ENCODE measurements at regions of chr7 and their contacts with region 1.

Region 1: GRCh38 chr7:146314962-146315361 is 198.4 kb downstream of the CNTNAP2 start:
- DNase-seq: no peak
- H3K4me3 ChIP-seq: no peak overlapping the region
- H3K4me3 Mint-ChIP-seq: no peak overlapping the region
- H3K27ac ChIP-seq: no peak overlapping the region
- H3K27ac Mint-ChIP-seq: no peak overlapping the region
- H3K4me1 ChIP-seq: no peaks in the 10 kb centered on the region
- H3K4me1 Mint-ChIP-seq: no peaks in the 10 kb centered on the region
- H3K27me3 ChIP-seq: no peaks in the 10 kb centered on the region
- H3K27me3 Mint-ChIP-seq: no peaks in the 10 kb centered on the region

Region 2: GRCh38 chr7:146067880-146068279 is 247.1 kb before region 1 on chr7:
- CTCF ChIA-PET with region 1: no interaction called
- POLR2A ChIA-PET with region 1: no interaction called
- intact Hi-C with region 1: no loop called
- DNase-seq: no peak
- H3K4me3 ChIP-seq: no peak overlapping the region
- H3K4me3 Mint-ChIP-seq: no peak overlapping the region
- H3K27ac ChIP-seq: no peak overlapping the region
- H3K27ac Mint-ChIP-seq: no peak overlapping the region
- H3K4me1 ChIP-seq: no peaks in the 10 kb centered on the region
- H3K4me1 Mint-ChIP-seq: no peaks in the 10 kb centered on the region
- H3K27me3 ChIP-seq: no peaks in the 10 kb centered on the region
- H3K27me3 Mint-ChIP-seq: no peaks in the 10 kb centered on the region

Region 3: DNA sequence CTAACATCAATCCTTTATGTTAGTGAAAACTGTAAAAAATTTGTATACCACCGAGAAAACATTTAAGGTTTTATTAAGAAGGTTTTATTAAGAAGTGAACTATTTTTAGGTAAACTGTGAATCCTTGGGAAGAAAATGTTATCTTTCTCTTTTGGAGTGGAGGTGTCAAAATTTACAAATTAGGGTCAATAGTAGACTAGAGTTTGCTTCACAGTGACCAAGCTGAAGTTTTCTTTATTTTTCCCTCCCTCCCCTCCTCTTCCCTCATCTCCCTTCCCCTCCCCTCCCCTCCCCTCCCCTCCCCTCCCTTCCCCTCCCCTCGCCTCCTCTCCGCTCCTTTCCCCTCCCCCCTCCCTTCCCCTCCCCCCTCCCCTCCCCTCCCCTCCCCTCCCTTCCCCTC is 29.5 kb before region 1 on chr7:
- CTCF ChIA-PET with region 1: no interaction called
- POLR2A ChIA-PET with region 1: no interaction called
- intact Hi-C with region 1: no loop called
- DNase-seq: no peak
- H3K4me3 ChIP-seq: no peak overlapping the region
- H3K4me3 Mint-ChIP-seq: no peak overlapping the region
- H3K27ac ChIP-seq: no peak overlapping the region
- H3K27ac Mint-ChIP-seq: no peak overlapping the region
- H3K4me1 ChIP-seq: no peaks in the 10 kb centered on the region
- H3K4me1 Mint-ChIP-seq: no peaks in the 10 kb centered on the region
- H3K27me3 ChIP-seq: no peaks in the 10 kb centered on the region
- H3K27me3 Mint-ChIP-seq: no peaks in the 10 kb centered on the region

Region 4: DNA sequence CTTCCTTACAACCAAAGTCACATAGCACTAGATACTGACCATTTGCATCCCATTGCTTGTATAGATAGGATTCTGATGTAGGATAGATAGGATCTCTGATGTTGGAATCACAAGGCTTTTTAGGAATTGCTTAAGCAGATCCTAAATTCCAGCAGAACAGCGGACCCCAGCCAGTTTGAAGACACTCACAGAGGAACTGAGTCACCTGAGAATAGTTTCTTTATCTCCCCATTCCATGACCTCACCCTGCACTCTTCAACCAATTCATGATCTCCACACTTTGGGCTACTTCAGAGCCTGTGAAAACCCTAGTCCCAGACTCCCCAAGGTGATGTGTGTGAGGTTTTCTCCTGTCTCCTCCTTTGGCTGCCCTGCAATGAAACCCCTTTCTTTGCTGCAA is 18.9 kb before region 1 on chr7:
- CTCF ChIA-PET with region 1: no interaction called
- POLR2A ChIA-PET with region 1: no interaction called
- intact Hi-C with region 1: loop called (anchors 2 kb)
- DNase-seq: no peak
- H3K4me3 ChIP-seq: no peak overlapping the region
- H3K4me3 Mint-ChIP-seq: no peak overlapping the region
- H3K27ac ChIP-seq: no peak overlapping the region
- H3K27ac Mint-ChIP-seq: no peak overlapping the region
- H3K4me1 ChIP-seq: no peaks in the 10 kb centered on the region
- H3K4me1 Mint-ChIP-seq: no peaks in the 10 kb centered on the region
- H3K27me3 ChIP-seq: no peaks in the 10 kb centered on the region
- H3K27me3 Mint-ChIP-seq: no peaks in the 10 kb centered on the region

Region 5: GRCh38 chr7:146414373-146414772 is 99.4 kb after region 1 on chr7:
- CTCF ChIA-PET with region 1: no interaction called
- POLR2A ChIA-PET with region 1: no interaction called
- intact Hi-C with region 1: no loop called
- DNase-seq: no peak
- H3K4me3 ChIP-seq: no peak overlapping the region
- H3K4me3 Mint-ChIP-seq: no peak overlapping the region
- H3K27ac ChIP-seq: no peak overlapping the region
- H3K27ac Mint-ChIP-seq: no peak overlapping the region
- H3K4me1 ChIP-seq: no peaks in the 10 kb centered on the region
- H3K4me1 Mint-ChIP-seq: no peaks in the 10 kb centered on the region
- H3K27me3 ChIP-seq: no peaks in the 10 kb centered on the region
- H3K27me3 Mint-ChIP-seq: no peaks in the 10 kb centered on the region

Region 6: GRCh38 chr7:147044941-147045340 is 730.0 kb after region 1 on chr7:
- CTCF ChIA-PET with region 1: no interaction called
- POLR2A ChIA-PET with region 1: no interaction called
- intact Hi-C with region 1: no loop called
- DNase-seq: no peak
- H3K4me3 ChIP-seq: no peak overlapping the region
- H3K4me3 Mint-ChIP-seq: no peak overlapping the region
- H3K27ac ChIP-seq: no peak overlapping the region
- H3K27ac Mint-ChIP-seq: no peak overlapping the region
- H3K4me1 ChIP-seq: no peaks in the 10 kb centered on the region
- H3K4me1 Mint-ChIP-seq: no peaks in the 10 kb centered on the region
- H3K27me3 ChIP-seq: no peaks in the 10 kb centered on the region
- H3K27me3 Mint-ChIP-seq: no peaks in the 10 kb centered on the region

Measured in CD4-positive, alpha-beta memory T cell (primary cell).